GM10248 (cell line): ENCODE measurements at regions of chr10 and their contacts with region 1.

Region 1: DNA sequence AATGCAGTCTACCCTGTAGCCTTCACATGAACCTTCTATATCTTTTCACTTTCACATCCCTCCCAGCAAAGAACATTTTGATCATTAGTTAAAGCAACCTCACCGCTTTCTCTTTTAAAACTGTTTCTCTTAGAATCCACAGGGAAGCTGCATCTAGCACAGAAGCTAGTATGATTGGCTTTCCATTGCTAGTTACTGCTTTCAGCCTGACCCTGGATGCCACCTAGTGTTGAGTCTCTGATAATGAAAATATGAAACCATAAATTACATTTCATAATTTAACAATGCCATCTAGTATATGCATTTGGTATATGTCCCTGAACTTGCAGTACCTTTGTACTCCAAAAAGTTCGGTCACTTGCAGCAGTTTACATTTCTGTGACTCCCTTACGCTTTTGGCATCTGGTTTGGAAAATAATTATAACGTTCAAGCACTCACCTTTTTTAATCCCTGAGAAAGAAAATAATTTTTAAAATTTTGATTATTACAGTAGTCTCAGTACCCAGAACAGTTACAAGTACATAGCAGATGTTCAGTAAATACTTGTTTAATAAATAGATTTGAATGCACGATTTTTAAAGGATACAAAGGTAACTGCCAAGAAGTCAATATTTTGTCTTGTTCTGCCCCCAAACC is 22.7 kb downstream of the CISD1 start:
- DNase-seq: peak; percentile 37
- CTCF ChIP-seq: peak; percentile 67

Region 2: DNA sequence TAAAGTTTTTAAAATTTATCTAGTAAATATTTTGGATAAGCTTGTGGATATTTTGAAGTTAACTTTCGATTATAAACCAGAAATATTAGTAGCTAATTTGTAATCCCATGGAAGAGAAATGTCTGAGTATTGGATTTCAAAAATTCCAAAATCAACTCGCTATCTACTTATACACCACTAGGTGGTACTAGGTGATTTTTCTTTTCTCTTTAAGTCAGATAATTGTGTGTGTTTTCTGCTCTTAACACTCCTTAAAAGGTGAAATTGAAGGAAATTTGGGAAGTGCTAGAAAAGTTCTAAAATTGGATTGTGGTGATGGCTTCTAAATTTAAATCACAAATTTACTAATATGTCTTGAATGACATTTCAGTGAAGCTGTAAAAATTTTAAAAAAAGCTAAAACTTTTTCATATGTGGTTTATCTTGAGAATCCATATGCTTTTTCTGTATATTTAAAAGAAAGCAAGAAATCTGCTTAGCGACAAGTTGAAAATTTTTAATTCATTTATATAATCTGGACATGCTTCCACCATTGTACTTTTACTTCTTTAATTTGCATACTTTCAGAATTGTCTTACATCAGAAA is 114.2 kb before region 1 on chr10:
- CTCF ChIA-PET with region 1: interaction called, 149 read pairs
- POLR2A ChIA-PET with region 1: no interaction called
- DNase-seq: peak; percentile 24
- CTCF ChIP-seq: peak; percentile 51

Region 3: DNA sequence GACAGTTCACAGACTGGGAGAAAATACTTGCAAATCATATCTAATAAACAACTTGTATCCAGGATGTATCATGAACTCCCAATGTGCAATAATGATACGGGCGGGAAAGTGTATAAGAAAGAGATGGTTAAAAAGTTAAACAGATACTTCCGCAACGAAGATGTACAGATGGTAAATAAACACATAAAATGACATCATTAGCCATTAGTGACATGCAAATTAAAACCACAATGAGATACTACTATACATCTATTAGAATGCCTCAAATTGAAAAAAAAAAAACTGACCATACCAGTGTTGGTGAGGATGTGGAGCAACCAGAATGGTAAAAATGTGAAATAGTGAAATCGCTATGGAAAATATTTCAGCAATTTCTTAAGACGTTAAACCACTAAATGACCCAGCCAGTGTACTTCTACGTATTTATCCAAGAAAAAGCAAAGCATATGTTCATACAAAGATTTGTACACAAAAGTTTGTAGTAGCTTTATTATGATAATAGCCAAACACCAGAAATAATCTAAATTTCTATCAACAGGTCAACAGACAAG is 107.5 kb before region 1 on chr10:
- CTCF ChIA-PET with region 1: interaction called, 149 read pairs
- POLR2A ChIA-PET with region 1: no interaction called
- DNase-seq: no peak
- CTCF ChIP-seq: no peak

Region 4: GRCh38 chr10:58280982-58281752 is 10.5 kb before region 1 on chr10:
- CTCF ChIA-PET with region 1: interaction called, 14 read pairs
- POLR2A ChIA-PET with region 1: no interaction called
- DNase-seq: no peak
- CTCF ChIP-seq: no peak

Region 5: DNA sequence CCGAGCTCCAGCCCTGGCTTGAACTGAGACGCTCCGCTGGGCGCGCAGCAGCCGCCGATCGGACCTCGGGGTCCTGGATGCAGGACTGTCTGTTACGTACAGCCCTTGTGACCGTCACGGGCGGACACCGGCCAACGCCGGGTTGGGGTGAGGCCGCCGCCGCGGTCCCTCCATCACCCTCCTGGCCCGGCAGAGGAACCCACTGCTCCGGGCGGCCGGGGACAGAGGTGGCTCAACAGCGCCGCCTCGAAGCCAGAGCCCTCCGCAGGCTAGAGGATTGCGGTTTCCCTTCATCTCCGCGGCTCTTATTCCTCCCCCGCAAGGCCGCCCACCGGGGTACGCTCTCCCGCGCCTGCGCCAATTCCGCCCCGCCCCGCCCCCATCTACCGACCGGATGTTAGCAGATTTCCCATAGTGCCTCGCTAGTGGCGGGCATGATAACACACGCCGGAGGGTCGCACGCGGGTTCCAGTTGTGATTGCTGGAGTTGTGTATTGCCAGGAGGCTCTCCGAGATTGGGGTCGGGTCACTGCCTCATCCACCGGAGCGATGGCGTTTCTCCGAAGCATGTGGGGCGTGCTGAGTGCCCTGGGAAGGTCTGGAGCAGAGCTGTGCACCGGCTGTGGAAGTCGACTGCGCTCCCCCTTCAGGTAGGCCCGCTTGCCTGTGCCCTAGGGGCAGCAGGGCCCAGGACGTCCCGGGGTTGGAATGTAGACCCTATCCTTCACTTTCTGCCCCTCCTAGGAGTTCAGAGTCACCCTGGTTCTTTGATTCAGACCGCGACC is 93.5 kb after region 1 on chr10 and contains the start of gene TFAM:
- CTCF ChIA-PET with region 1: interaction called, 19 read pairs
- POLR2A ChIA-PET with region 1: no interaction called
- DNase-seq: peak; percentile 94
- CTCF ChIP-seq: peak; percentile 53